Activated naive CD4-positive, alpha-beta T cell treated with anti-CD3 and anti-CD28 coated beads for 36 hours (primary cell): ENCODE measurements at regions of chr2 and their contacts with region 1.

Region 1: GRCh38 chr2:200811336-200812121 is at the start of gene BZW1:
- DNase-seq: peak; percentile 99
- H3K4me3 Mint-ChIP-seq: peak within 1 kb of the TSS; percentile 99
- H3K27ac Mint-ChIP-seq: peak within 1 kb of the TSS; percentile 100
- H3K4me1 Mint-ChIP-seq: peaks cover 46% of the 10 kb centered on the region
- H3K27me3 Mint-ChIP-seq: no peaks in the 10 kb centered on the region
- total RNA-seq, gene BZW1: 423 to 442 TPM

Region 2: GRCh38 chr2:200471324-200471848 is 340.1 kb before region 1 on chr2:
- CTCF ChIA-PET with region 1: no interaction called
- intact Hi-C with region 1: loop called (anchors 5 kb)
- DNase-seq: peak; percentile 59
- H3K4me3 Mint-ChIP-seq: no peak overlapping the region
- H3K27ac Mint-ChIP-seq: no peak overlapping the region
- H3K4me1 Mint-ChIP-seq: peaks cover 38% of the 10 kb centered on the region
- H3K27me3 Mint-ChIP-seq: no peaks in the 10 kb centered on the region

Region 3: GRCh38 chr2:200703127-200703925 is 108.2 kb before region 1 on chr2:
- CTCF ChIA-PET with region 1: interaction called, 3 read pairs
- intact Hi-C with region 1: loop called (anchors 1 kb)
- DNase-seq: peak; percentile 68
- H3K4me3 Mint-ChIP-seq: peak overlapping the region; percentile 19
- H3K27ac Mint-ChIP-seq: peak overlapping the region; percentile 83
- H3K4me1 Mint-ChIP-seq: peaks cover 55% of the 10 kb centered on the region
- H3K27me3 Mint-ChIP-seq: peaks cover 1% of the 10 kb centered on the region

Region 4: DNA sequence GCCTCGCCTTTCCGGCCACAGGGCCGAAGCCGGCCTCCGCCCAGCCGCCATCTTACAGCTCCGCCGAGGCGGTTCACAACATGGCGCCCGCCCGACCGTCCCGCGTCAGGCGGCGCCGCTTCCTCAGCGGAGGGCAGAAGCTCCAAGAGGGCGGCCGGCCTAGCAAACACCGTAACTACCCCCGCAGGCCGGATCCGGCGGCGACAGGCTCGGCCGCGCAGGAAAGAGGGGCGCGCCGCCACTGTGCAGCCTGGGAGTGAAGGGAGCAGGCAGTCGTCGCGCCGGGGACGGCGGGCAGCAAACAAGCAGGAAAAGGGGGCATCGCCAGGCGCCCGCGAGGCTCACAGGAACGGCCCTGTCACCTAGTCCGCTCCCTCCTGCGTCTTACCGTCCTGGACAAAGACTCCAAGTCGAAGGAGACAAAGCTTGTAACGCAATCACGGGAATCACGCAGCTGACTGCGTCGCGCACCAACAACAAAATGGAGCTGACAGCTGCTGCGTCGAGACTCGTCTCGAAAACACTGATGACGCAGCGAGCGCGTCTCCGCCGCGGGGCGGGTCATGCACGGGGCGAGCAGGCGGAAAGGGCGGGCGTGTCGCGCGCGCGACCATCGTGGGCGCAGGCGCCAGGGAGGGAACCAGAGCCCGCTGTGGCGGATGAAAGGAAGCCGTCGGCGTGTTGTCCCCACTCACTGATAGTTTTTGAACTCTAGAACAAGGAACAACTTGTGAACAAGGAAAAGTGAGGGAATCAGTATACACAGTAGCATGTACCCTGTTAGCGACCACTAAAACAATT is 52.8 kb after region 1 on chr2 and contains the start of gene CLK1:
- CTCF ChIA-PET with region 1: interaction called, 4 read pairs
- intact Hi-C with region 1: loop called (anchors 1 kb)
- DNase-seq: peak; percentile 98
- H3K4me3 Mint-ChIP-seq: peak within 1 kb of the TSS; percentile 98
- H3K27ac Mint-ChIP-seq: peak within 1 kb of the TSS; percentile 100
- H3K4me1 Mint-ChIP-seq: peaks cover 32% of the 10 kb centered on the region
- H3K27me3 Mint-ChIP-seq: no peaks in the 10 kb centered on the region
- total RNA-seq, gene CLK1: 174 to 196 TPM

Region 5: DNA sequence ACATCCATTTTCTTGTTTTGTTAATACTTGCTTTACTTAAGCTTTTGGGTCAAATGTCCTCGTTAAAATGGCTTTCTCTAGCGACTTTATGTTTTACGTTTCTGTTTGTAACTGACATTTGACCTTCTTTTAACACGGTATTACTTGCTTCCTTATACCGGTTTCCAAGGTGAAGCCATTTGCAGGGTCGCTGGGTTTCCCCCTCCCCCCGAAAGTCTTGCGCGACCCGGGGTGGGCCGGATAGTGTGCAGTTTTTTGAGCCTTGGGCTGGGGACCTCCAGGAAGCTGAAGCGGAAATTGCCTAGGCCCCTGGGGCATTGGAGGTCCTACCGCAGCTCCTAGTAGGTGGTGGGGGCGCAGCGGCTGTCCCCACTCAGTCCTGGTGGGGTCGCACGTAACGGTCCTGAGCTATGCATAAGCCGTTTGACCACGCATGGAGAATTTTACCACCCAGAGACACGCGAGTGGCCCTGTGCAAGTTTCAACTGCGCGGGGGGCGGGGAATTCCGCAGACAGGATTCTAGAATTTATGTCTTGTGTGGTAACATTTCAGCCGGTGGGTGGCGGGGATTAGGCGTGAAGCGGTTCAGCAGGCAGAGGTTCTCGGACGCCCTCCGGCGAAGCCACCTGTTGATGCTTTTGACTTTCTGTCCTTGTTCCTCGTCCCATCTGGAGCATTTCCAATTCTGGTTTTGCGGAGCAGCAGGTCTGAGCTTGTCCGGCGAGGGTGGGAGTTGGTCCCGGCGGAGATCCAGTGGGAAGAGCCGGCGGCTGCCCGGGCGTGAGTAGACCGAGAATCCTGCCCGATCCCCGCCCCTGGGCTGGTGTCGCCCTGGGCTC is 306.8 kb after region 1 on chr2:
- CTCF ChIA-PET with region 1: interaction called, 4 read pairs
- intact Hi-C with region 1: loop called (anchors 2 kb)
- DNase-seq: peak; percentile 94
- H3K4me3 Mint-ChIP-seq: peak overlapping the region; percentile 96
- H3K27ac Mint-ChIP-seq: peak overlapping the region; percentile 100
- H3K4me1 Mint-ChIP-seq: peaks cover 41% of the 10 kb centered on the region
- H3K27me3 Mint-ChIP-seq: no peaks in the 10 kb centered on the region

Region 6: GRCh38 chr2:201780674-201781581 is 969.4 kb after region 1 on chr2 and contains the start of gene ALS2:
- CTCF ChIA-PET with region 1: no interaction called
- intact Hi-C with region 1: loop called (anchors 1 kb)
- DNase-seq: peak; percentile 96
- H3K4me3 Mint-ChIP-seq: peak within 1 kb of the TSS; percentile 86
- H3K27ac Mint-ChIP-seq: peak within 1 kb of the TSS; percentile 83
- H3K4me1 Mint-ChIP-seq: peaks cover 13% of the 10 kb centered on the region
- H3K27me3 Mint-ChIP-seq: peaks cover 3% of the 10 kb centered on the region
- total RNA-seq, gene ALS2: 9.4 to 11.2 TPM